WTC11 (cell line): ENCODE measurements at regions of chr9 and their contacts with region 1.

Region 1: DNA sequence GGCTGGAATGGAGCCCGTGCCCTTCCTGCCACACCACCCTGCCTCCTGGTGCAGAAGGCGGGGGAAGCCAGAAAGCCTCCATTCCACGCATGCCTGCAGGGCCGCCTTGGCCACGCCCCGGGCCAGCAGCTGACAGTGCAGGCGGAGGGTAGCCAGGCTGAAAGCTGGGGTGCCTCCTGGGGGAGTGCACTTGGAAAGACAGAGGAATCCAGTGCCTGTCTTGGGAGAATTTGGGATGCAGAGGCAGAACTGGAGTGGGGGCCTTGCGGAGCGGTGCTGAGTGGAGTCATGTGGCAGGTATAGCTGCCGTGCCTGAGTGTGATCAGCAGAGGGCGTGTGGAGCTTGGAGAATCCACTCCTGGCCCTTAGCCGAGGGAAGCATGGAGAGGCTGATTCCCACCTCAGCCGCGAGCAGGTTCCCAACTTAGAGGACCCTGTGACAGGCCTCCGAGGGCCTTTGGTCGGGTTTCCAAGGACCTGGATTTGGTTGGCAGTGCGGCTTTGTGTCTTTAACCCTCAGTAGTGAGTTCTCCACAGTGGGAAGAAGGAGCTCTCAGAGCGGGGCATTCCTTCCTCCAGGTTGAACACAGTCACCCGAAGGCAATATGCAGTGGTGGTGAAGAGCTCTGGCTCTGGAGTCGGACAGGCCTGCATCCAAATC is 9.1 kb upstream of the URM1 start:
- DNase-seq: peak; percentile 88
- ATAC-seq: peak; percentile 66
- H3K4me3 Mint-ChIP-seq: peak overlapping the region; percentile 43
- H3K27ac Mint-ChIP-seq: no peak overlapping the region
- H3K4me1 Mint-ChIP-seq: peaks cover 40% of the 10 kb centered on the region
- H3K27me3 Mint-ChIP-seq: peaks cover 57% of the 10 kb centered on the region
- CTCF ChIP-seq: peak; percentile 85

Region 2: DNA sequence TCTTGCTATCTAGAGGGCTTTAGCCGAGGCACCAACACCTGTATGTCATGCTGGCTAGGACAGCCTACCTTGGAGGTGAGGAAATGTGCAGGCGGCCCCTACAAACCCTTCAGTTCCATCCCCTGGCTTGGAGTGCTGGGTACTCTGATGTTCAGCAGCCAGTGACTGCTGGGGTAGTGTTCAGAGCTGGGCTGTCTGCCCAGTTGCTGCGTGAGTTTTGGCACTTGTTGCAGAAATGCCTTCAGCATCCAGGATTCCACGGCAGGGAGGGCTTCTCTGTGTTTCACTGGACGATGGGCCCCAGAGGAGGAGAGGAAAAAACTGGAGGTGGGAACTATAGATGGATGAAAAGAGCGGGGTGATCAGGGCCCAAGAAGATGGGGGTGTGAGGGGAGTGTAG is 75.7 kb before region 1 on chr9:
- CTCF ChIA-PET with region 1: no interaction called
- POLR2A ChIA-PET with region 1: no interaction called
- DNase-seq: no peak
- ATAC-seq: no peak
- H3K4me3 Mint-ChIP-seq: no peak overlapping the region
- H3K27ac Mint-ChIP-seq: no peak overlapping the region
- H3K4me1 Mint-ChIP-seq: no peaks in the 10 kb centered on the region
- H3K27me3 Mint-ChIP-seq: no peaks in the 10 kb centered on the region
- CTCF ChIP-seq: no peak

Region 3: DNA sequence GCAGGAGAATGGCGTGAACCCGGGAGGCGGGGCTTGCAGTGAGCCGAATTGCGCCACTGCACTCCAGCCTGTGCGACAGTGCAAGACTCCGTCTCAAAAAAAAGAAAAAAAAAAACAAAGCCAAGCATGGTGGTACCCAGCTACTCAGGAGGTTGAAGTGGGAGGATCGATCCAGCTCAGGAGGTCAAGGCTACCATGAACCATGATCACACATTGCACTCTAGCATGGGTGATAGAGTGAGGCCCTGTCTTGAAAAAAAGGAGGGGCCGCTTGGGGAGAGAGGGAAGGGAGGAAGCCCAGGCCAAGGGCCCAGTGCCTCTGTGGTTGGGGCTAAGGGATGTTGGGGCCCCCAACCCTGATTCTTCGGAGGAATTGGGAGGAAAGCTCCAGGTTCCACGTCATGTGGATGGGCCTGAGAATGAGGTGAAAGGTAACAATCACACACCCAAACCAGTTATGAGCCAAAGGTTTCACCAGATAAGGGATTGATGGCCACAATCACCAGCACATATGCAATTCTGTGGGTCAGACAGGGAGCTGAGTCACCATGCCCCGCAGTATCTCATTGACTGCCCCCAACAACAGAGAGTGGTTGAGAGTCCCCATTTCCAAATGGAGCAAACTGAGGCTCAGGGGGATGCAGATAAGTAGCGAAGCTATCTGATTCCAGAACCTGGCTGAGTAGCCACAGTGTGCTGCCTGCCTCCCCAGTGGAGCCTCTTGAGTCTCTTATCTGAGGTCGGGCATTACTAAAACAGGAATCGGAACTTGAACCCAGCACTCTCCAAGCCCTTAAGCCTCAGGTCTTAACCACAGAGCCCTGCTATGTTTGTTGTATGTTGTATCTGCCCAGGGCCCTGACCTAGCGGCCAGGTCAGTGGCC is 65.5 kb before region 1 on chr9:
- CTCF ChIA-PET with region 1: interaction called, 22 read pairs
- POLR2A ChIA-PET with region 1: no interaction called
- DNase-seq: no peak
- ATAC-seq: no peak
- H3K4me3 Mint-ChIP-seq: no peak overlapping the region
- H3K27ac Mint-ChIP-seq: peak overlapping the region; percentile 23; the same call in 1 of the 2 replicates
- H3K4me1 Mint-ChIP-seq: no peaks in the 10 kb centered on the region
- H3K27me3 Mint-ChIP-seq: peaks cover 2% of the 10 kb centered on the region; the same call in 1 of the 2 replicates
- CTCF ChIP-seq: no peak

Region 4: GRCh38 chr9:128383007-128383753 is 21.1 kb after region 1 on chr9:
- CTCF ChIA-PET with region 1: interaction called, 74 read pairs
- POLR2A ChIA-PET with region 1: interaction called, 23 read pairs
- DNase-seq: peak; percentile 69
- ATAC-seq: peak; percentile 83
- H3K4me3 Mint-ChIP-seq: peak overlapping the region; percentile 28
- H3K27ac Mint-ChIP-seq: no peak overlapping the region
- H3K4me1 Mint-ChIP-seq: peaks cover 56% of the 10 kb centered on the region
- H3K27me3 Mint-ChIP-seq: peaks cover 84% of the 10 kb centered on the region
- CTCF ChIP-seq: no peak

Region 5: DNA sequence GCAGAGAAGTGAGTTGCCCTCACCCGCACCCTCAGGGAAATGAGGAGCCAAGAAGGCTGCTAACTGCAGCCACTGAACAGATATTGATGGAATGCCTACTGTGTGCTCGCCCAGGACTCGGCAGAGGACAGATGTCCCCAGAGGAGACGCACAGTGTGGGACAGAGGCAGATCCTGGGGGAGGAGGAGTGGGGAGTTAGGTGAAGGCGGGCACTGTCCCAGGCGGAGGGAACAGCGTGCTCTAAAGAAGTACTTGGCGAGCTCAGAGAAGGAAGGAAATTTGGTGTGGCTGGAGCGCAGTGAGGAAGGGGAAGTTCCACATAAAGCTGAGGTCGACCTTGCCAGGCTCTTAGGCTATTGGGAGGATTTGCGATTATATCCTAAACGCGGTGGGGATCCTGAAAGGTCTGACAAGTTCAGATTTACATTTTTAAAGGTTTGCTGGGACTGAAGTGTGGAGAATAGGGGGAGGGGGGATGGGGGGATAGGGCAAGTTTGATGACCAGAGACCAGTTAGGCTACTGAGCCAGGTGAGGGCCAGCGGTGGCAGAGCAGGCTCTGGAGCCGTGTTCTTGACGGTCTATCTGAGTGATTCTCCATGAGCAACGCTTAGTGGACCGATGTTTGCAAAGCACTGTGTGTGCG is 35.0 kb after region 1 on chr9:
- CTCF ChIA-PET with region 1: interaction called, 74 read pairs
- POLR2A ChIA-PET with region 1: no interaction called
- DNase-seq: peak; percentile 39
- ATAC-seq: peak; percentile 41
- H3K4me3 Mint-ChIP-seq: no peak overlapping the region; the same call in 1 of the 2 replicates
- H3K27ac Mint-ChIP-seq: no peak overlapping the region
- H3K4me1 Mint-ChIP-seq: peaks cover 33% of the 10 kb centered on the region
- H3K27me3 Mint-ChIP-seq: peaks cover 97% of the 10 kb centered on the region
- CTCF ChIP-seq: no peak

Region 6: GRCh38 chr9:128406848-128407391 is 44.8 kb after region 1 on chr9:
- CTCF ChIA-PET with region 1: interaction called, 248 read pairs
- POLR2A ChIA-PET with region 1: interaction called, 7 read pairs
- DNase-seq: no peak
- ATAC-seq: no peak
- H3K4me3 Mint-ChIP-seq: no peak overlapping the region
- H3K27ac Mint-ChIP-seq: no peak overlapping the region
- H3K4me1 Mint-ChIP-seq: peaks cover 37% of the 10 kb centered on the region
- H3K27me3 Mint-ChIP-seq: peaks cover 99% of the 10 kb centered on the region
- CTCF ChIP-seq: no peak